BJ (cell line): ENCODE measurements at regions of chr21 and their contacts with region 1.

Region 1: DNA sequence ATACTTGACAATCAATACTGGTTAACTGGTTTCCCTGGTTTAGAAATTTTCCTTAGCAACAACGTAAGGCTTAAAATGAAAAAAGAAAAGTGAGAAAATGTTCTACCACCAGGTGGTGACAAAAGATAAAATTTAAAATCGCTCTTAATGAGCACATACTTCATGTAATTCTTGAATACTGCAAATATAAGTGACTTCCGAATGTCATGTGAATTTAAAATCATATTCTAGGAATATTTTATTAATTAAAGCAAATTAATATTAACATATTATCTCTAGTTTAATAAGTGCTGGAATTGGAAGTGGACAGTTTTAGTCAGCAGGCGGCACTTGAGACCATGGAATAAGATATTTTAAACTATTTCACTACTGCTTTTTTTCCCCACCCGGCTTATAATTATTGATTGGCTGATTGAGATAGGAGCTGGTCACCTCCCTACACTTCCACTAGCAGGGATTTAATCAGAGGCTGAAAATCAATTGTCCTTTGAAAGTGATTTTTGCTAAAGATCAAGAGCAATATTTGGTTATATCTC is 5.0 kb upstream of the ADAMTS1 start:
- DNase-seq: no peak
- H3K4me3 ChIP-seq: no peak overlapping the region
- H3K27me3 ChIP-seq: no peaks in the 10 kb centered on the region
- CTCF ChIP-seq: peak; percentile 51

Region 2: DNA sequence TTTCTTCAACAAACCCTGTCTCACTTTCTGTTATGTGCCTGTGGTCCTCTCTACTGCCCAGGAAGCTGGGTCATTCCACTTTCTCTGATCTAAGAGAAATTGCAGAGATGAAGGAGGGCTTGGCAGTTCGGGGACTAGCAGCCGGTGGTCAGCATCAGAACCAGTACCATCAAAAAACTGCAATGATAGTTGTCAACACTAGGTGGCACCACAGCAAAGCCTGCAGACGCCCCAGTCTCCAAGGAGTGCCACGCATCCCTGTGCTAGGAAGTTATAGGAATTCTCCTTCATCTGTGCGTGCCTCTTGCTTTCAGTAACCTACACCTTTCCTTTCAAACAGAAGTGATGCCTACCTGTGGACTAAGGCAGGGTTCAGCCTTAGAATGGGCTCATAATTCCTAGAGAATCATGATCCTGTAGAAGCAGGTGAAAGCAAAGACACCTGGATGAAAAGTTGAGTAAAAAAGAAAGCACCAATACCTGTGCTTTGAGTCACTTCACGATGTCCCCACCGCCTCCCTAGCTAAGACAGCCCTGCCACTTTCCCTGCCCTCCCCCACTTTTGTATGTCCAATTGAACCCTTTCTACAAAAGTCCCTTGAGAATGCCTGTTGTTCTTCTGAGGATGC is 134.2 kb before region 1 on chr21:
- CTCF ChIA-PET with region 1: no interaction called
- POLR2A ChIA-PET with region 1: no interaction called
- DNase-seq: no peak
- H3K4me3 ChIP-seq: no peak overlapping the region
- H3K27me3 ChIP-seq: no peaks in the 10 kb centered on the region
- CTCF ChIP-seq: peak; percentile 94

Region 3: DNA sequence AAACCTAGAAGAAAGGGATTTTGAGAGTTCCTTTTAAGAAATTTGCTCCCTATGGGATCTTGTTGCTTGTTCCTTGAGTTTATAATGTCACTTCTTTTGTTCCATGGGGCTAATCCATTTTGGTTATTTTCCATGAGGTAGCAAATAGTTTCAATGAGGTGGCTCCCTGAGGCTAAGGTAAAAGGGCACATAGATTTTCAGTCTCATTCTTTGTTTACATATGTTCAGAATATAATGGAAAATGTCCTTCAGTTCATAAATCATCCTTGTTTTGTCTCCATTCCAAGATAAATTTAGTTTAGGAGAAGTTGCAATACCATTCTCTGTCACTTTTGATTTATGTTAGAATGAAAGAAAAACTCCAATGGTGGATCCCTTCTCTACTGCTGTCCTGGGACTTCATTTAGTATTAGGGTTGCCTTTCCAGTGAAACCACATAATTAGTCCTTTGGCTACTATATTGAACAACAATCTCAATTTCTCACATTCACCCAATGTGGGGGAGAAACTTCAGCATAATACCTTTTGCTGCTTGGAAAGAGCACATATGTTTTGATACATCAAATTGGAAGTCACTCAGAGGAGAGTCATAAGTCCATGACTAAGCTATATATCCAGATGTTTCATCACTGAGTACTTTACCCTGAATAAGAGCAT is 197.6 kb after region 1 on chr21:
- CTCF ChIA-PET with region 1: no interaction called
- POLR2A ChIA-PET with region 1: no interaction called
- DNase-seq: no peak
- H3K4me3 ChIP-seq: no peak overlapping the region
- H3K27me3 ChIP-seq: no peaks in the 10 kb centered on the region
- CTCF ChIP-seq: no peak

Region 4: DNA sequence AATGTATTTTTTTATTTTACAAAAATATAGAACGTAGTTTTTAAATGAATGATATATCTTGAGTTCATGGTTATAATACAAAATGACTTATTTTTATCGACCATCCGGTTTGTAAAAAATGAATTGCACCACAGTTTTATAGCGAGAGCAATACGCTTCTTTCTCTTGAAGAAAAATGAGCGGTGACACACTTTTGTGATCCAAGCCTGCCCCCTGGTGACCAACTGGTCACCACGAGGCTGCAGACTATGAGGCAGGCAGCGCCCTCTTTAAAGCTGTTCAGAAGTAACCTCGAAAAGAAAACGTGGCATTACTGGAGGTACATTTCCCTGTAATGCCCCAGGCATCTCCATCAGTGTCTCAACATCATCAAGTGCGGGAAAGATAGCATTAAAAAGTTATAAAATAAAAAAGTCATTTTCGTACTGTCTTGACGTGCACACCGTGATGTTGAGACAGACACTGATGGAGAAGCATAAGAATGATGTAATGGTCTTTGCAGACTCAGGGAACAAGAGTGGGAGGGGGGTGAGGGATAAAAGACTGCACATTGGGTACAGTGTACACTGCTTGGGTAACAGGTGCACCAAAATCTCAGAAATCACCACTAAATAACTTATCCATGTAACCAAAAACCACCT is 850.9 kb after region 1 on chr21:
- CTCF ChIA-PET with region 1: interaction called, 29 read pairs
- POLR2A ChIA-PET with region 1: no interaction called
- DNase-seq: no peak
- H3K4me3 ChIP-seq: no peak overlapping the region
- H3K27me3 ChIP-seq: no peaks in the 10 kb centered on the region
- CTCF ChIP-seq: peak; percentile 83

Region 5: DNA sequence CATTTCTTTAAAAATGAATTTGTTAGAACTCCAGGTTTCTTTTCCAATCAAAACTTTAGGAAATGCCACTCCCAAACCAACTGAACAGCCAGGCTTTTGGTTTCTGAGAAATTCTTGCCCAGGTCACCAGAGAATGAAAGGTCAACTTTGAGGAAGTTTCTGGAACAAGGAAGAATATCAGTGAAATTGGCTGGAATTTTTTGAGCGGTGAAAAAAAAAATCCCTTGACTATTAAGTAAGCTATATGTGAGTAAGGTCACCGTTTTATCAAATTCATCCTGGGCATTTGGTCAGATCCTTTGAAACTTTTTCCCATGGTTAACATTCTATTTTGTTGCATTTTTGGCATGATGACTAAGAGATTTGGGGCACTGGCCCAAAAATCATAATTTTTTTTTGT is 1673.2 kb after region 1 on chr21:
- CTCF ChIA-PET with region 1: no interaction called
- POLR2A ChIA-PET with region 1: interaction called, 10 read pairs
- DNase-seq: no peak
- H3K4me3 ChIP-seq: no peak overlapping the region
- H3K27me3 ChIP-seq: no peaks in the 10 kb centered on the region
- CTCF ChIP-seq: no peak